ENCODE measurements at regions of chr19 and their contacts with region 1.

Region 1: GRCh38 chr19:13085666-13086065 is 17.0 kb downstream of the LYL1 start:
- DNase-seq: no peak
- ATAC-seq: no peak
- H3K4me3 ChIP-seq: no peak overlapping the region
- H3K27ac ChIP-seq: peak overlapping the region in 1 of 2 donors; percentile 65
- H3K4me1 ChIP-seq: no peaks in the 10 kb centered on the region
- H3K27me3 ChIP-seq: no peaks in the 10 kb centered on the region

Region 2: DNA sequence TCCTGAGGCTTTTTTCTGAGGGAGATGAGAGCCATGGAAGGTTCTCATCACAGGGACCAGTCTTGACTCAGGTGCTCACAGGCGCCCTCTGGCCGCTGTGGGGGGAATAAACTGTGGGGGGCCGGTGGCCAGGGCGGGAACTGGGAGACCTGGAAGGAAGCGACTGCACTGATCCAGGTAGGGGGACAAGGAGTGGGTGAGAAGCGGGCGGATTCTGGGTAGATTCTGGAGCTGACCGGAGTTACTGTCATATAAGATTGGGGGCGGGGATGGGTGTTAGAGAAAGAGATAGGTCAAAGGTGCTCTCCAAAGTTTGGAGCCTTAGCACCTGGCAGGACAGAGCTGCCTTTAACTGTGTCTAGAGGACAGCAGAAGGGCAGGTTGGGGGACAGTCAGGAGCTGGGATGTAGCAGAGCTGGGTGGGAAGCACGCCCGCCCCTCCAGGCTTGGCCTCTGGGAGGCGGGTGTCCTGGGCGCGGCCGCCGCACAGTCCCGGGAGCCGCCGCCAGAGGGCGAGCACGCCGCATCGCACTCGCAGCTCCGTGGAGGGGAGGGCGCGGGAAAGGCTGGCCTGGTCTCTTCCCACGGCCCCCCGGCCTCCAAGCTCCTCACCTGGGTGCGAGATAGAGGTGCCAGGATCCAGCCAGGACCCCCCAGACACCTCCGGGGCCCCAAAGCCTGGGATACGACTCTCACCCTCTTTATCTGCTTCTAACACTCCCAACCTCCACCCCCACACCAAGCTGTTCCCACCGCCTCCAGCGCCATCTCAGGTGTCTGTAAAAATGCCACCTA is 120.5 kb before region 1 on chr19:
- intact Hi-C with region 1: no loop called
- DNase-seq: peak; percentile 82 to 95
- ATAC-seq: peak; percentile 97
- H3K4me3 ChIP-seq: peak overlapping the region in 1 of 2 donors; percentile 25
- H3K27ac ChIP-seq: no peak overlapping the region
- H3K4me1 ChIP-seq: no peaks in the 10 kb centered on the region
- H3K27me3 ChIP-seq: no peaks in the 10 kb centered on the region

Region 3: GRCh38 chr19:13055213-13056051 is 30.2 kb before region 1 on chr19:
- intact Hi-C with region 1: loop called (anchors 2 kb)
- DNase-seq: peak; percentile 93 to 96
- ATAC-seq: peak; percentile 82
- H3K4me3 ChIP-seq: no peak overlapping the region
- H3K27ac ChIP-seq: peak overlapping the region; percentile 83 to 88
- H3K4me1 ChIP-seq: peaks cover 0 to 13% of the 10 kb centered on the region in 2 donors
- H3K27me3 ChIP-seq: no peaks in the 10 kb centered on the region